ENCODE measurements at regions of chr22 and their contacts with region 1.

Region 1: DNA sequence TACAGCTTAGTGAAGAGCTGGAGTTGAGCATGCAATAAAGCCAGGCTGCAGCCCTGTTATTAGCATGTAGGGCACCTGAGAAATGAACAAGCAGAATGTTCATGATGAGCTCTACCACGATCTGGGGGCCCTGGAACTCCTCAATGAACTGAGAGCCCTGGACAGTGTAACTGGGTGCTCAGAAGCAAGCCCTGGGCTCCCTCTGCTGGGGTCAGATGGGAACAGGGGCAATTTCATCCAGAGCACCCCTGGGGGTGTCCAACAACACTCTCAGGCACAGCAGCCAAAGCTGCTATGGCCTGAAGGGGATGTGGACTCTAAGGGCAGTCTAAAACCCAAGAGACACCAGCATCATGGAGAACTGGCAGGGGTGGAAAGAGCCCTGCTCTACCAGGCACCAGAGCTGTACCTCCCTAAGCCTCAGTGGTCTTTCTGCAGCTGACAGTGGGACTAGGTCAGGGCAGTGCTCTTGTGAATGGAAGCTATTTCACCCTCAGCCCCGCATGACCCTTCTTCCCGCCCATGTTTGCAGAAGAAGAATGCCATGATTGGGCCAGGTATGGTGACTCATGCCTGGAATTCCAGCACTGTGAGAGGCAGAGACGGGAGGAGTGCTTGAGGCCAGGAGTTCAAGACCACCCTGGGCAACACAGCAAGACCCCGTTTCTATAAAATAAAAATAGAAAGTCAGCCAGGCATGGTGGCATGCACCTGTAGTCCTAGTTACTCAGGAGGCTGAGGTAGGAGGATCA is 28.9 kb downstream of the THOC5 start:
- DNase-seq: no peak
- ATAC-seq: no peak
- H3K4me3 ChIP-seq: no peak overlapping the region
- H3K27ac ChIP-seq: no peak overlapping the region
- H3K4me1 ChIP-seq: no peaks in the 10 kb centered on the region
- H3K27me3 ChIP-seq: no peaks in the 10 kb centered on the region
- CTCF ChIP-seq: peak in 3 of 5 experiments; percentile 21 to 32 (median 22)
- POLR2A ChIP-seq: no peak

Region 2: GRCh38 chr22:29291215-29291614 is 233.4 kb before region 1 on chr22:
- in situ Hi-C with region 1: loop called in 1 of 4 experiments (anchors 25 kb)
- intact Hi-C with region 1: no loop called
- DNase-seq: no peak
- ATAC-seq: no peak
- H3K4me3 ChIP-seq: no peak overlapping the region
- H3K27ac ChIP-seq: no peak overlapping the region
- H3K4me1 ChIP-seq: peaks cover 16 to 17% of the 10 kb centered on the region in 2 donors
- H3K27me3 ChIP-seq: no peaks in the 10 kb centered on the region
- CTCF ChIP-seq: no peak
- POLR2A ChIP-seq: no peak

Region 3: DNA sequence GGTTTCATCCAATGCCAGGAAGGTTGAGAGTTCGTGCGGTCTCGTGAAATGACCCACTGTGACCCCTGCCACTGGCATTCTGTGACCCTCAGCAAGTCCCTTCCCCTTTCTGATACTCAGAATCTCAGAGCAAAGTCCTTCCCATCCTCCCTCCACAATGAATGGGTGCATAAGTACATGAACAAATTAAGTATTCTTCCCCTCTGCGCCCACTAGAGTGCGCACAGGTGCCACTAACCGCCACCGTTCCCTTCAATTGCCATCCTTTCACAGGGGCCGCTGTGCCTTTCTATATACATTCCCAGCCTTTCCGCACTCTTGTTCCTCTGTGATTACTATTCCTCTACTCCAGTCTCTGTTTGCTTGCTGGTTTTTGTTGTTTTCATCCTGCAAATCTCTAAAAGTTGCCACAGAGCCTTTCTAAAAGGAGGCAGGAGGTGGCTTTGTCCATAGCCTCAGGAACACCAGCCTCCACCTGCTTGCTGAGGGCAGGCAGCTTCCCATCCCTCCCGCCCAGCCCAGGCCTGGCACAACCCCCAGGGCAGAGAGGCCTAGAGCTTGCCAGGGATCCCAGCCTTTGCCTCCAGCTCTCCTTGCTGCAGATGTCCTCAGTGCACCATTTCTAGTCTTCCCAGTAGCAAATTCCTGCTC is 129.6 kb before region 1 on chr22:
- in situ Hi-C with region 1: loop called in 1 of 4 experiments (anchors 10 kb)
- intact Hi-C with region 1: loop called (anchors 10 kb)
- DNase-seq: peak in 1 of 2 donors; percentile 57
- ATAC-seq: peak; percentile 84 to 89
- H3K4me3 ChIP-seq: no peak overlapping the region
- H3K27ac ChIP-seq: no peak overlapping the region
- H3K4me1 ChIP-seq: no peaks in the 10 kb centered on the region
- H3K27me3 ChIP-seq: no peaks in the 10 kb centered on the region
- CTCF ChIP-seq: peak; percentile 52 to 77 (median 71)
- POLR2A ChIP-seq: no peak

Region 4: DNA sequence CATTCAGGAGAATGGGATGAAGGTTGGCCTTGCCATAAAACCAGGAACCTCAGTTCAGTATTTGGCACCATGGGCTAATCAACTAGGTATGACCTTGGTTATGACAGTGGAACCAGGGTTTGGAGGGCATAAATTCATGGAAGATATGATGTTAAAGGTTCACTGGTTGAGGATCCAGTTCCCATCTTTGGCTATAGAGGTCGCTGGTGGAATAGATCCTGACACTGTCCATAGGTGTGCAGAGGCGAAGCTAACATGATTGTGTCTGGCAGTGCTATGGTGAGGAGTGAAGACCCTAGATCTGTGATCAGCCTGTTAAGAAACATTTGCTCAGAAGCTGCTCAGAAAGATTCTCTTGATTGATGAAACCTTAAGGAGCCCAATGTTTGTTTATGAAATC is 84.5 kb after region 1 on chr22:
- in situ Hi-C with region 1: no loop called
- intact Hi-C with region 1: no loop called
- DNase-seq: no peak
- ATAC-seq: no peak
- H3K4me3 ChIP-seq: no peak overlapping the region
- H3K27ac ChIP-seq: no peak overlapping the region
- H3K4me1 ChIP-seq: peaks cover 11 to 15% of the 10 kb centered on the region in 2 donors
- H3K27me3 ChIP-seq: no peaks in the 10 kb centered on the region
- CTCF ChIP-seq: no peak
- POLR2A ChIP-seq: no peak